Activated B cell treated with CpG ODN at 0.5 μM for 24 hours (primary cell): ENCODE measurements at regions of chr7 and their contacts with region 1.

Region 1: GRCh38 chr7:140175221-140176121 is 1.3 kb downstream of the KDM7A start:
- DNase-seq: peak; percentile 73
- ATAC-seq: peak; percentile 64
- H3K4me3 Mint-ChIP-seq: peak overlapping the region; percentile 88
- H3K27ac Mint-ChIP-seq: peak overlapping the region; percentile 95
- H3K4me1 Mint-ChIP-seq: peaks cover 44% of the 10 kb centered on the region
- H3K27me3 Mint-ChIP-seq: no peaks in the 10 kb centered on the region
- CTCF ChIP-seq: peak; percentile 45

Region 2: GRCh38 chr7:139645572-139646523 is 529.6 kb before region 1 on chr7:
- CTCF ChIA-PET with region 1: no interaction called
- POLR2A ChIA-PET with region 1: no interaction called
- intact Hi-C with region 1: loop called (anchors 2 kb)
- DNase-seq: peak; percentile 65
- ATAC-seq: peak; percentile 59
- H3K4me3 Mint-ChIP-seq: no peak overlapping the region
- H3K27ac Mint-ChIP-seq: no peak overlapping the region
- H3K4me1 Mint-ChIP-seq: peaks cover 39% of the 10 kb centered on the region
- H3K27me3 Mint-ChIP-seq: no peaks in the 10 kb centered on the region
- CTCF ChIP-seq: peak; percentile 79

Region 3: GRCh38 chr7:140196361-140197217 is 21.1 kb after region 1 on chr7:
- CTCF ChIA-PET with region 1: no interaction called
- POLR2A ChIA-PET with region 1: interaction called, 3 read pairs
- intact Hi-C with region 1: loop called (anchors 2 kb)
- DNase-seq: no peak
- ATAC-seq: no peak
- H3K4me3 Mint-ChIP-seq: no peak overlapping the region
- H3K27ac Mint-ChIP-seq: peak overlapping the region; percentile 32
- H3K4me1 Mint-ChIP-seq: peaks cover 5% of the 10 kb centered on the region
- H3K27me3 Mint-ChIP-seq: no peaks in the 10 kb centered on the region
- CTCF ChIP-seq: no peak

Region 4: GRCh38 chr7:140249036-140249806 is 73.8 kb after region 1 on chr7:
- CTCF ChIA-PET with region 1: no interaction called
- POLR2A ChIA-PET with region 1: interaction called, 16 read pairs
- intact Hi-C with region 1: no loop called
- DNase-seq: no peak
- ATAC-seq: no peak
- H3K4me3 Mint-ChIP-seq: no peak overlapping the region
- H3K27ac Mint-ChIP-seq: no peak overlapping the region
- H3K4me1 Mint-ChIP-seq: peaks cover 11% of the 10 kb centered on the region
- H3K27me3 Mint-ChIP-seq: no peaks in the 10 kb centered on the region
- CTCF ChIP-seq: no peak

Region 5: DNA sequence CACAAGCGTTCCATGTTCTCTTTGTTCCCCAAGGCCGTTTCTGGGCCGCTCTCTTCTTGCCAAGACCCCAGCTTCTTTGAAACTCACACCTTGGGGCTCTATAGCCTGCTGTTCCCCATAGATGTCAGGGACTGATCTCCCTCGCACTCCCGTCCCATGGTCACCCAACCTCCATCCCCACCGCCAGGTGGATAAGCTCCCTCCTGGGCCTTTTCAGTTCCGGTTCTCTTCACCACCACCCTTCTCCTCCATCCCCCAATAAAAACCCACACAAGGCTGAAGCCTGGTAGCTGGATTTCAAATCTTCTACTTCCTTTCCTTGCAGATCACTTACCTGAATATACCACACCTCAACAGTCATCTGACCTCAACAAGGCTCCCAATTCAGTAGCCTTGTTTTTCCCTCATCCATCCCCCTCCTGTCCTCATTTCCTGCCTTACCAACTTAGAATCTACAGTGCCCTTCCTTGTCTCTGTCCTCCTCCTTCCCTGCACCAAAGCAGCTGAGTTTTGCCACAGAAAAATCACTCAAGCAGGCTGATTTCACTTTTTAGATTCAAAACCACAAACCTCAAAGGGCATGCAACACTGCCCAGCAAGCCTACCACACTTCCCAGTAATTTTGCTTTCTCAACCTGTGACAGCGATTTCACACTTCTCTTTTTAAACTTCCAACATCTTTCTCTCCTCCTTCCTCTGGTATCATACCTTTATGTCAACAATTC is 215.2 kb after region 1 on chr7:
- CTCF ChIA-PET with region 1: no interaction called
- POLR2A ChIA-PET with region 1: interaction called, 3 read pairs
- intact Hi-C with region 1: loop called (anchors 2 kb)
- DNase-seq: peak; percentile 32
- ATAC-seq: peak; percentile 88
- H3K4me3 Mint-ChIP-seq: no peak overlapping the region
- H3K27ac Mint-ChIP-seq: no peak overlapping the region
- H3K4me1 Mint-ChIP-seq: no peaks in the 10 kb centered on the region
- H3K27me3 Mint-ChIP-seq: no peaks in the 10 kb centered on the region
- CTCF ChIP-seq: no peak

Region 6: GRCh38 chr7:140479062-140479738 is 303.7 kb after region 1 on chr7 and contains the start of gene MKRN1:
- CTCF ChIA-PET with region 1: no interaction called
- POLR2A ChIA-PET with region 1: interaction called, 3 read pairs
- intact Hi-C with region 1: loop called (anchors 1 kb)
- DNase-seq: peak; percentile 92
- ATAC-seq: peak; percentile 89
- H3K4me3 Mint-ChIP-seq: peak within 1 kb of the TSS; percentile 100
- H3K27ac Mint-ChIP-seq: peak within 1 kb of the TSS; percentile 99
- H3K4me1 Mint-ChIP-seq: peaks cover 30% of the 10 kb centered on the region
- H3K27me3 Mint-ChIP-seq: no peaks in the 10 kb centered on the region
- CTCF ChIP-seq: no peak
- total RNA-seq, gene MKRN1: 94.3 and 99.9 TPM in 2 replicates

Region 7: GRCh38 chr7:141014524-141015395 is 839.3 kb after region 1 on chr7 and contains the start of gene MRPS33:
- CTCF ChIA-PET with region 1: no interaction called
- POLR2A ChIA-PET with region 1: interaction called, 4 read pairs
- intact Hi-C with region 1: loop called (anchors 10 kb)
- DNase-seq: peak; percentile 86
- ATAC-seq: peak; percentile 98
- H3K4me3 Mint-ChIP-seq: peak within 1 kb of the TSS; percentile 99
- H3K27ac Mint-ChIP-seq: peak within 1 kb of the TSS; percentile 100
- H3K4me1 Mint-ChIP-seq: peaks cover 20% of the 10 kb centered on the region
- H3K27me3 Mint-ChIP-seq: peaks cover 13% of the 10 kb centered on the region
- CTCF ChIP-seq: no peak
- total RNA-seq, gene MRPS33: 37.5 and 46.4 TPM in 2 replicates

Region 8: GRCh38 chr7:141992156-141992555 is 1816.7 kb after region 1 on chr7:
- CTCF ChIA-PET with region 1: no interaction called
- POLR2A ChIA-PET with region 1: no interaction called
- intact Hi-C with region 1: no loop called
- DNase-seq: no peak
- ATAC-seq: no peak
- H3K4me3 Mint-ChIP-seq: no peak overlapping the region
- H3K27ac Mint-ChIP-seq: no peak overlapping the region
- H3K4me1 Mint-ChIP-seq: no peaks in the 10 kb centered on the region
- H3K27me3 Mint-ChIP-seq: no peaks in the 10 kb centered on the region
- CTCF ChIP-seq: no peak